CD4-positive, alpha-beta T cell (primary cell): ENCODE measurements at regions of chr16 and their contacts with region 1.

Region 1: GRCh38 chr16:30657866-30658730 is at the start of gene FBRS:
- DNase-seq: peak; percentile 99 to 100 (median 100)
- ATAC-seq: peak; percentile 74
- H3K4me3 ChIP-seq: peak within 1 kb of the TSS; percentile 93
- H3K4me3 Mint-ChIP-seq: peak within 1 kb of the TSS; percentile 94
- H3K27ac ChIP-seq: peak within 1 kb of the TSS; percentile 99
- H3K27ac Mint-ChIP-seq: peak within 1 kb of the TSS; percentile 99
- H3K4me1 ChIP-seq: peaks cover 51% of the 10 kb centered on the region
- H3K4me1 Mint-ChIP-seq: peaks cover 44% of the 10 kb centered on the region
- H3K27me3 ChIP-seq: no peaks in the 10 kb centered on the region
- H3K27me3 Mint-ChIP-seq: no peaks in the 10 kb centered on the region
- CTCF ChIP-seq: peak; percentile 78
- total RNA-seq, gene FBRS: 162 to 163 TPM

Region 2: GRCh38 chr16:30370444-30371247 is 287.5 kb before region 1 on chr16 and contains the start of gene TBC1D10B:
- CTCF ChIA-PET with region 1: no interaction called
- POLR2A ChIA-PET with region 1: interaction called, 11 read pairs
- intact Hi-C with region 1: loop called in 1 of 2 experiments (anchors 5 kb)
- DNase-seq: peak; percentile 97 to 100 (median 99)
- ATAC-seq: peak; percentile 84
- H3K4me3 ChIP-seq: peak within 1 kb of the TSS; percentile 77
- H3K4me3 Mint-ChIP-seq: peak within 1 kb of the TSS; percentile 93
- H3K27ac ChIP-seq: peak within 1 kb of the TSS; percentile 59 to 78
- H3K27ac Mint-ChIP-seq: peak within 1 kb of the TSS; percentile 82
- H3K4me1 ChIP-seq: peaks cover 49% of the 10 kb centered on the region
- H3K4me1 Mint-ChIP-seq: peaks cover 51% of the 10 kb centered on the region
- H3K27me3 ChIP-seq: no peaks in the 10 kb centered on the region
- H3K27me3 Mint-ChIP-seq: no peaks in the 10 kb centered on the region
- CTCF ChIP-seq: peak; percentile 27
- total RNA-seq, gene TBC1D10B: 12.7 to 14.7 TPM

Region 3: DNA sequence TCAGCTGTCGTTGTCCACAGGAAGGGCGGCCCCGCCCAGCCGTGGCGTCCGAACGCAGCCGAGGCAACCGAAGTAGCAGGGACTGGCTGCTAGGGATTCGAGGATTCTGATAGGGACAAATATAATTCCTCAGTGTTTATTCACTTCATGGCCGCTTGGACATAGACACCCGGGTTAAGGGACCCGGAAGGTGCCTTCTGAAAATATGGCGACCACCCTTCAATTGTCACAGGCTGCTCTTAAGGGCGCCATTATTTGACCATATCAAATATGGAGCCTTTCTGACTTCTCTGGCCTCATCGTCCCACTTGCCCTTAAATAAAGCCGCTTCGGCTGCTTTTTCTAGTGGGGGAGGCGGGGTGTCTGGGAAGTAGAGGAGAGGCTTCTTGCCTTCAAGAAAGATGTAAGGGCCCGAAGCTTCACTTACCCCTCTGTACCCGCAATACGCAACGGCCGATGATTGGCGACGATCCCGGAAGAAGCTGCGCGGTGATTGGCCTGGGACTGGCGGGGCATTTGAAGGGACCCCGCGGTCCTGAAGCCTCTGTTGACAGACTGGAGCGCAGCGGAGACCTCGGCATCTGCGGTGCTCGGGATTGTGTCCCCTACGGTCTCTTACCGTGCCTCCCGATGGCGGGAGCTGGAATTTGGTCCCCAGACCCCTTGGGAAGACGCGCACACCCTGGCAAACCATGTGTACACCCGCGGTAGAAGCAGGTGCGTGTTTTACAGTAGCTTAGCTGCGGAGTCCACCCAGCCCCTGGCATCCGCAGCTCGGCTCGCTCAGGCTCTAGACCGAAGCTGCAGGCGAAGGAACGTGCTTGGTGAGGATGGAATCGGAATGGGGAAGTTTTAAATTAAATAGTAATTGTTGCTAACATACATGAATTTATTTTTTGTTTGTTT is 86.2 kb before region 1 on chr16 and contains the start of gene ZNF688:
- CTCF ChIA-PET with region 1: no interaction called
- POLR2A ChIA-PET with region 1: interaction called, 26 read pairs
- intact Hi-C with region 1: no loop called
- DNase-seq: peak; percentile 87 to 99 (median 92)
- ATAC-seq: peak; percentile 79
- H3K4me3 ChIP-seq: peak within 1 kb of the TSS; percentile 94
- H3K4me3 Mint-ChIP-seq: peak within 1 kb of the TSS; percentile 98
- H3K27ac ChIP-seq: peak within 1 kb of the TSS; percentile 90 to 96
- H3K27ac Mint-ChIP-seq: peak within 1 kb of the TSS; percentile 97
- H3K4me1 ChIP-seq: peaks cover 51% of the 10 kb centered on the region
- H3K4me1 Mint-ChIP-seq: peaks cover 42% of the 10 kb centered on the region
- H3K27me3 ChIP-seq: no peaks in the 10 kb centered on the region
- H3K27me3 Mint-ChIP-seq: no peaks in the 10 kb centered on the region
- CTCF ChIP-seq: no peak
- total RNA-seq, gene ZNF688: 8.8 to 9.6 TPM

Region 4: GRCh38 chr16:30637942-30638341 is 20.2 kb before region 1 on chr16:
- CTCF ChIA-PET with region 1: interaction called, 7 read pairs
- POLR2A ChIA-PET with region 1: interaction called, 13 read pairs
- intact Hi-C with region 1: loop called in 1 of 2 experiments (anchors 2 kb)
- DNase-seq: peak in 4 of 14 experiments; percentile 19 to 75 (median 63)
- ATAC-seq: peak; percentile 17
- H3K4me3 ChIP-seq: no peak overlapping the region
- H3K4me3 Mint-ChIP-seq: peak overlapping the region; percentile 48
- H3K27ac ChIP-seq: no peak overlapping the region
- H3K27ac Mint-ChIP-seq: no peak overlapping the region
- H3K4me1 ChIP-seq: peaks cover 19% of the 10 kb centered on the region
- H3K4me1 Mint-ChIP-seq: peaks cover 17% of the 10 kb centered on the region
- H3K27me3 ChIP-seq: no peaks in the 10 kb centered on the region
- H3K27me3 Mint-ChIP-seq: no peaks in the 10 kb centered on the region
- CTCF ChIP-seq: peak; percentile 24

Region 5: DNA sequence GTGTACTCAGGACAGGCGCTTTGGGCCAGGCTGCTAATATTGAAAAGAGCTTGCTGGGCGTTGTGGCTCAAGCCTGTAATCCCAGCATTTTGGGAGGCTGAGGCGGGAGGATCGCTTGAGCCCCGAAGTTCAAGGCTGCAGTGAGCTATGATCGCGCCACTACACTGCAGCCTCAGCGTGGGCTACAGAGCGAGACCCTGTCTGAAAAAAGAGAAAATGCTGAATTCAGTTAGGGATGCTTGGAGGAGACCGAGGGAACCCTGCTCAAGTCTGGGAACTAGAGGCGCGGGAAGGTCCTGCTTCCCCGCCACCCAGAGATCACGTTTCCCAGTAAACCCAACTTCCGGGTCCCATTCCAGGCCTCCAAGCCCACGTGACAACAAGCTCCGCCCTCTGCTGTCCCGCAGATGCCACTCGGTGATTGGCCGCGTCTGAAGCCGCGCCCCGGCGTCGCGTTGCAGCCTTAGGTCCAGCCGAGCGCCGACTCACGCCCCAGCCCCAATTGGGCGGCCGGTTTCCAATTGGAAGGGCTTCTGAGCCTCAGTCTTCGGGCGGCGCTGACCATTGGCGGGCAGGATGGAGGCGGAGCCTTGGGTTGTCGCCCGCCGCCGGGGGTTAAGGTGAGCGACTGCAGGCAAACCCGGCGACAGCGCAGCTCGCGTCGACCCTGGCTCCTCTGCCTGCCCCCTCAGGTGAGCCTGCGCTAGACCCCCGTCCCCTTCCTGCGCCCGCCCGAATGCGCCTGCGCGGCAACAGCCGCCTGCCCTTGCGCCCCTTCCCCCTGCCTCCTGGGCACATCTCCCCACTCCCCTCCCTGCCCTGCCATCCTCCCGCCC is 89.9 kb after region 1 on chr16 and contains the start of gene PHKG2:
- CTCF ChIA-PET with region 1: interaction called, 6 read pairs
- POLR2A ChIA-PET with region 1: interaction called, 11 read pairs
- intact Hi-C with region 1: no loop called
- DNase-seq: peak; percentile 88 to 99 (median 94)
- ATAC-seq: peak; percentile 94
- H3K4me3 ChIP-seq: peak within 1 kb of the TSS; percentile 72
- H3K4me3 Mint-ChIP-seq: peak within 1 kb of the TSS; percentile 87
- H3K27ac ChIP-seq: peak within 1 kb of the TSS; percentile 8 to 68
- H3K27ac Mint-ChIP-seq: peak within 1 kb of the TSS; percentile 68
- H3K4me1 ChIP-seq: peaks cover 19% of the 10 kb centered on the region
- H3K4me1 Mint-ChIP-seq: peaks cover 30% of the 10 kb centered on the region
- H3K27me3 ChIP-seq: no peaks in the 10 kb centered on the region
- H3K27me3 Mint-ChIP-seq: no peaks in the 10 kb centered on the region
- CTCF ChIP-seq: no peak
- total RNA-seq, gene PHKG2: 24.8 to 25.2 TPM

Region 6: GRCh38 chr16:31016018-31016417 is 357.9 kb after region 1 on chr16:
- CTCF ChIA-PET with region 1: no interaction called
- POLR2A ChIA-PET with region 1: no interaction called
- intact Hi-C with region 1: no loop called
- DNase-seq: no peak
- ATAC-seq: no peak
- H3K4me3 ChIP-seq: no peak overlapping the region
- H3K4me3 Mint-ChIP-seq: no peak overlapping the region
- H3K27ac ChIP-seq: no peak overlapping the region
- H3K27ac Mint-ChIP-seq: no peak overlapping the region
- H3K4me1 ChIP-seq: peaks cover 3% of the 10 kb centered on the region
- H3K4me1 Mint-ChIP-seq: peaks cover 13% of the 10 kb centered on the region
- H3K27me3 ChIP-seq: peaks cover under 1 to 13% of the 10 kb centered on the region in 2 experiments
- H3K27me3 Mint-ChIP-seq: peaks cover 34% of the 10 kb centered on the region
- CTCF ChIP-seq: no peak